Calu3 (cell line): ENCODE measurements at regions of chr1 and their contacts with region 1.

Region 1: GRCh38 chr1:221543529-221544120 is 198.3 kb downstream of the DUSP10 start:
- DNase-seq: no peak
- H3K4me3 Mint-ChIP-seq: no peak overlapping the region
- H3K27ac Mint-ChIP-seq: no peak overlapping the region
- H3K4me1 Mint-ChIP-seq: peaks cover 14% of the 10 kb centered on the region
- H3K27me3 Mint-ChIP-seq: no peaks in the 10 kb centered on the region
- CTCF ChIP-seq: peak; percentile 40

Region 2: GRCh38 chr1:221725735-221726672 is 182.4 kb after region 1 on chr1:
- CTCF ChIA-PET with region 1: no interaction called
- intact Hi-C with region 1: loop called (anchors 5 kb)
- DNase-seq: no peak
- H3K4me3 Mint-ChIP-seq: peak overlapping the region; percentile 35
- H3K27ac Mint-ChIP-seq: peak overlapping the region; percentile 73
- H3K4me1 Mint-ChIP-seq: peaks cover 76% of the 10 kb centered on the region
- H3K27me3 Mint-ChIP-seq: no peaks in the 10 kb centered on the region
- CTCF ChIP-seq: no peak

Region 3: GRCh38 chr1:222009105-222009730 is 465.6 kb after region 1 on chr1:
- CTCF ChIA-PET with region 1: interaction called, 3 read pairs
- intact Hi-C with region 1: loop called (anchors 10 kb)
- DNase-seq: peak; percentile 41
- H3K4me3 Mint-ChIP-seq: no peak overlapping the region
- H3K27ac Mint-ChIP-seq: no peak overlapping the region
- H3K4me1 Mint-ChIP-seq: peaks cover 10% of the 10 kb centered on the region
- H3K27me3 Mint-ChIP-seq: no peaks in the 10 kb centered on the region
- CTCF ChIP-seq: peak; percentile 44